Heart left ventricle (tissue), 16 donors: ENCODE measurements at regions of chr7 and their contacts with region 1.

Region 1: GRCh38 chr7:47179812-47180515 is 401.9 kb downstream of the TNS3 start:
- DNase-seq: peak in 3 of 5 donors; percentile 43 to 51 (median 49)
- ATAC-seq: peak in 2 of 4 donors; percentile 47 to 73
- H3K4me3 ChIP-seq: no peak overlapping the region
- H3K27ac ChIP-seq: no peak overlapping the region
- H3K4me1 ChIP-seq: peaks cover 0 to 46% (median 13%) of the 10 kb centered on the region in 12 donors
- H3K27me3 ChIP-seq: no peaks in the 10 kb centered on the region
- CTCF ChIP-seq: peak; percentile 59 to 92 (median 90)
- POLR2A ChIP-seq: no peak

Region 2: DNA sequence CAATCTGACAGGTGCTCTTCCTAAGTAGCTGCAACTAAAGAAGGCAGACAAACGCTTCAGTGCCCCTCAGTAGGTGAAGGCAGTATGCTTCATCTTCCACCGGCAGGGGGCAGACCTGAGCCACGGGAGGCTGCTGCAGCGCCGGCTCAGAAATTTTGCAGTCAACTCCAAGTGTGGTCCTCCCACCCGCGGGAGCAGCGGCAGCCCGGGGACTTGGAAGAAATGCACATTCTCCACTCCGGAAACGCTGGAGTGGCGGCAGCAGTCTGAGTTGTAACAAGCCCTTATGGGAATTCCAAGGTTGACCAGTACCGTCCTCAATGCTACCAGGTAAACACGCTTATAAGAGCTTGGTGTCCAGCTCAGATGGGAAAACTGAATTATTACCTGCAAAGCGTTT is 1262.3 kb before region 1 on chr7:
- intact Hi-C with region 1: loop called (anchors 1 to 5 kb)
- DNase-seq: peak; percentile 79 to 91 (median 83)
- ATAC-seq: peak; percentile 27 to 58 (median 50)
- H3K4me3 ChIP-seq: peak overlapping the region in 9 of 12 donors; percentile 1 to 72 (median 61)
- H3K27ac ChIP-seq: peak overlapping the region in 1 of 12 donors; percentile 27
- H3K4me1 ChIP-seq: peaks cover 0 to 44% (median 20%) of the 10 kb centered on the region in 12 donors
- H3K27me3 ChIP-seq: peaks cover 0 to 48% (median 0%) of the 10 kb centered on the region in 9 donors
- CTCF ChIP-seq: peak; percentile 83 to 98 (median 96)
- POLR2A ChIP-seq: no peak

Region 3: DNA sequence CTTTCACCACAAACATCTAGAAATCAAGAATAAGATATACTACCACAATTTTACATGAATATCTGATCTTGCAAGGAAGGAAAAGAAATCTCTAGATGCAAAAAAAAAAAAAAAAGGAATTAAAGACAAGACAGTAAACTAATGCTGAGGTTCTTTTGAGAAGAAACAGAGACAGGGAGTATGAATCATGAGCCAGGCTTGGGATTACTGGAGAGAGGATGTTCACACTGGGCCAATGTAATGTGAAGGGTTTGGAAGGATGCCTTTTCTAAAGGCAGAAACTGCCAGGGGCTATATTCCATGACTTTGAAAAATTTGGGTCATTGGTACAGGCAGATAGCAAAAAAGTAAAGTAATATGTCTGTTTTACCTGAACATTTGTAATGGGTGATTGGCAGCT is 685.9 kb before region 1 on chr7:
- intact Hi-C with region 1: no loop called
- DNase-seq: no peak
- ATAC-seq: no peak
- H3K4me3 ChIP-seq: no peak overlapping the region
- H3K27ac ChIP-seq: no peak overlapping the region
- H3K4me1 ChIP-seq: peaks cover 0 to under 1% (median 0%) of the 10 kb centered on the region in 12 donors
- H3K27me3 ChIP-seq: no peaks in the 10 kb centered on the region
- CTCF ChIP-seq: no peak
- POLR2A ChIP-seq: no peak

Region 4: DNA sequence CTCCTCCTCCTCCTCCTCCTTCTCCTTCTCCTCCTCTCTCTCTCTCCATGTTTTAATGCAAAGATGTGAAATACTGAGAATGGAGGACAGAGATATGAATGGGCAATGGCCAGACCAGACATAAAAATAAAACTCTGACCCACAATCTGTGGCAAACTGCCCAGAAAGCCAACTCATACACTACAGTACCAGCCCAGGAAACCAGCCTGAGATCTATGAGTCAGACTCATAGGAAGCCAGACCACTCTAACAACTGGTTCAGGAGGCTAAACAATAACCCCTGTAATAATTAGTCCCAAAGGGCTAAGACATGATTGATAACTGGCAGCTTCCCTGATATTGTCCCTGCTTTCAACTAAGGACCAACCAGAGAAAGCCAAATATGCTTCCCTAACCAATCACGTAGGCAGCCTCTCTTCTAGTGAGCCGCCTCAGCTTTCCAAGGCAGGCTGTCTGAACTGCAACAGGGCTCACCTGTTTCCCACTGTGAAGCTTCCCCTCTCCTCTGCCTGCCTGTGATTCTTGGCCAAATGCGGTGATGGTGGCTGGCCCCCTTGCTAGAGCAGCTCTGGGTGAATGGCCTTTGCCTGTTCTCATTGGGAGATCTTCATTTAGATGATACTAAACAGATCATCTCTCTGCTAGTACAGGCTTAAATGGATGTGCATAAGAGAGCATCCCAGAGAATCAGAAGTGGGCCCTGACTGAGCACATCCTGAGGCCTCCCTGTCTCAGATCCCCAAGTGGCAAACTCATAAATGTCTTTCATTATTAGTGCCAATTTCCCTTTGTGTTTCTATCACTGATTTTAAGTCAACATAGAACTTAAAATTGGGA is 415.6 kb before region 1 on chr7:
- intact Hi-C with region 1: loop called in 1 of 10 experiments (anchors 10 kb)
- DNase-seq: peak in 4 of 5 donors; percentile 69 to 72 (median 70)
- ATAC-seq: peak; percentile 87 to 97 (median 96)
- H3K4me3 ChIP-seq: no peak overlapping the region
- H3K27ac ChIP-seq: peak overlapping the region in 2 of 12 donors; percentile 3 to 52
- H3K4me1 ChIP-seq: peaks cover 0 to 16% (median 2%) of the 10 kb centered on the region in 12 donors
- H3K27me3 ChIP-seq: no peaks in the 10 kb centered on the region
- CTCF ChIP-seq: no peak
- POLR2A ChIP-seq: no peak

Region 5: GRCh38 chr7:47227762-47228177 is 47.8 kb after region 1 on chr7:
- intact Hi-C with region 1: loop called in 1 of 10 experiments (anchors 5 kb)
- DNase-seq: peak in 4 of 5 donors; percentile 35 to 66 (median 58)
- ATAC-seq: peak in 3 of 4 donors; percentile 49 to 87 (median 57)
- H3K4me3 ChIP-seq: no peak overlapping the region
- H3K27ac ChIP-seq: no peak overlapping the region
- H3K4me1 ChIP-seq: peaks cover 0 to 3% (median 0%) of the 10 kb centered on the region in 12 donors
- H3K27me3 ChIP-seq: no peaks in the 10 kb centered on the region
- CTCF ChIP-seq: no peak
- POLR2A ChIP-seq: no peak

Region 6: GRCh38 chr7:47254081-47255006 is 74.4 kb after region 1 on chr7:
- intact Hi-C with region 1: loop called in 5 of 10 experiments (anchors 2 to 5 kb)
- DNase-seq: peak; percentile 82 to 92 (median 89)
- ATAC-seq: peak; percentile 82 to 95 (median 92)
- H3K4me3 ChIP-seq: peak overlapping the region; percentile 39 to 80 (median 61)
- H3K27ac ChIP-seq: peak overlapping the region; percentile 79 to 98 (median 90)
- H3K4me1 ChIP-seq: peaks cover 0 to 18% (median 16%) of the 10 kb centered on the region in 12 donors
- H3K27me3 ChIP-seq: no peaks in the 10 kb centered on the region
- CTCF ChIP-seq: peak; percentile 63 to 100 (median 98)
- POLR2A ChIP-seq: peak in 1 of 2 donors; percentile 57